HEK293T (cell line): ENCODE measurements at regions of chr17 and their contacts with region 1.

Region 1: DNA sequence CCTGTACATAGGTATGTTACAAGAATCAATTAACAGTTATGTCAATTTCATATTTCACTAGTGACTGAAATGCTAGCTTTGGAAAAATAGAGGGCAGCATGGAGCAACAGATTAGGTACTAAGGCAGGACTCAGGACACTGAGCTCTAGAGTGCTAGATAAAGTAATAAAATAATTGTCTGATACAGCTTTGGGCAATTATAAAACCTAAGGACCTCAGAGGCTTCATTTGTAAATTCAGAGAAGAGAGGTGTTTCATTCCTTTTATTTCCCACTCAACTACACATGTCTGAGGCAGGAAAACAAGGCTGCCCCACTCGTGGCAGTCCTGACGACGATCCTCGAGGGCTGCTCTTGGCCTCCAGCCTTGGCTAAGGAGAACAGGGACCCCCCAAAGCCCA is 81.5 kb downstream of the CA4 start:
- DNase-seq: no peak

Region 2: DNA sequence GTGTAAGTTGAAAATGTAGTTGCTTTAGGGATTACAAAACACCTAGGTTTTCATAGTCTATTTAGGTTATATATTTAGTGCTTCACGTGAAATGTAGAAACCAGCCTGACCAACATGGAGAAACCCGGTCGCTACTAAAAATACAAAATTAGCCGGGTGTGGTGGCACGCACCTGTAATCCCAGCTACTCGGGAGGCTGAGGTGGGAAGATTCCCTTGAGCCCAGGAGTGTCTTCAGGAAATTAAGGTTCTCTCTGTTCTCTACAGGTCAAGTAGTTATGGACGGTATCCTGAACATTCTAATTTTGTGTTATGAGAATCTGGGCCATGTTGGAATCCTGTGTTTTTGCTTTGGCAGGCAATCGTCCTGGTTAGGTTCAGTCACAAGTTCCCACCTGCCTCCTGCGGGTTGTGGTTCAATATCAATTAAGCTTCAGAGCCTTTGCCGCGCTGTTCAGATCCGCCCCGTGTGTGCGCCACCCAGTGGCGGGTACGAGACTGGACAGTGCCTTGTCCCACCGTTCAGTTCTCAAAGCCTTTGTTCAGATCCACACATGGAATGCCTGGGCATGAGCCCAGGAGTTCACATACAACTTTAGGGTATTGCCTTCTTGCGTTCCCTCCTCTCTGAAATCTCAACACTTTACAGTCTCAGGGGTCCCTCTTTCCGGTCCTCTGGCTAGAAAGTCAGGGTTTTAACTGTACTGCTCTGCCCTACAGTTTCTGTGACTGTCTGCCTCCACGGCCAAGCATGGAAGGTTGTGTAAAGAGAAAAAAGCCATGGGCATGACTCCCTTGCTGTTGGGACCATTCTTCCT is 194.2 kb before region 1 on chr17:
- CTCF ChIA-PET with region 1: no interaction called
- POLR2A ChIA-PET with region 1: no interaction called
- DNase-seq: peak; percentile 86

Region 3: DNA sequence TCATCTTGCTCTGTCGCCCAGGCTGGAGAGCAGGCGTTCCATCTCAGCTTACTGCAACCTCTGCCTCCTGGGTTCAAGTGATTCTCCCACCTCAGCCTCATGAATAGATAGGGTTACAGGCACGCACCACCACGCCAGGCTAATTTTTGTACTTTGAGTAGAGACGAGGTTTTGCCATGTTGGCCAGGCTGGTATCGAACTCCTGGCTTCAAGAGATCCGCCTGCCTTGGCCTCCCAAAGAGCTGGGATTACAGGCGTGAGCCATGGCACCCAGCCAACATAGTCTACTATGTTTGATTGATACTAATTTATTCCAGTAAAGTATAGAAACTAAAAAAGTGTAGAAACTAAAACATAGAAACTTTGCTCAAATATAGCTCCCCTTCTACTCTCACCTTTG is 13.4 kb after region 1 on chr17:
- CTCF ChIA-PET with region 1: interaction called, 10 read pairs
- POLR2A ChIA-PET with region 1: no interaction called
- DNase-seq: no peak